GM12878 (cell line): ENCODE measurements at regions of chr12 and their contacts with region 1.

Region 1: GRCh38 chr12:92928962-92929915 is at the start of gene EEA1:
- DNase-seq: peak; percentile 84
- ATAC-seq: peak; percentile 87
- H3K4me3 ChIP-seq: peak within 1 kb of the TSS; percentile 79
- H3K27ac ChIP-seq: peak within 1 kb of the TSS; percentile 98
- H3K4me1 ChIP-seq: peaks cover 4% of the 10 kb centered on the region
- H3K27me3 ChIP-seq: no peaks in the 10 kb centered on the region
- CTCF ChIP-seq: peak in 2 of 3 experiments; percentile 29 to 31; a peak in 3 of 6 replicates
- EP300 ChIP-seq: peak; percentile 30 to 35; a peak in 2 of 4 replicates
- POLR2A ChIP-seq: peak; percentile 96
- RAD21 ChIP-seq: peak; percentile 16; the same call in 1 of the 2 replicates
- polyA plus RNA-seq, gene EEA1: 5.5 to 9.5 TPM

Region 2: GRCh38 chr12:92702754-92703679 is 226.2 kb before region 1 on chr12 and contains the start of gene PLEKHG7:
- CTCF ChIA-PET with region 1: no interaction called
- POLR2A ChIA-PET with region 1: no interaction called
- RAD21 ChIA-PET with region 1: no interaction called
- SMC1A ChIA-PET with region 1: interaction called, 3 read pairs
- in situ Hi-C with region 1: no loop called
- intact Hi-C with region 1: loop called (anchors 5 kb)
- DNase-seq: peak; percentile 80
- ATAC-seq: peak; percentile 91
- H3K4me3 ChIP-seq: peak within 1 kb of the TSS; percentile 69
- H3K27ac ChIP-seq: peak within 1 kb of the TSS; percentile 81
- H3K4me1 ChIP-seq: peaks cover 25% of the 10 kb centered on the region
- H3K27me3 ChIP-seq: no peaks in the 10 kb centered on the region
- CTCF ChIP-seq: no peak
- EP300 ChIP-seq: peak in 1 of 2 experiments; percentile 28; a peak in 1 of 4 replicates
- POLR2A ChIP-seq: peak; percentile 63; the same call in 1 of the 2 replicates
- RAD21 ChIP-seq: 0 out of 2 replicates have a peak, but pooled peaks have one; percentile 1
- polyA plus RNA-seq, gene PLEKHG7: 0.16 to 0.34 TPM

Region 3: DNA sequence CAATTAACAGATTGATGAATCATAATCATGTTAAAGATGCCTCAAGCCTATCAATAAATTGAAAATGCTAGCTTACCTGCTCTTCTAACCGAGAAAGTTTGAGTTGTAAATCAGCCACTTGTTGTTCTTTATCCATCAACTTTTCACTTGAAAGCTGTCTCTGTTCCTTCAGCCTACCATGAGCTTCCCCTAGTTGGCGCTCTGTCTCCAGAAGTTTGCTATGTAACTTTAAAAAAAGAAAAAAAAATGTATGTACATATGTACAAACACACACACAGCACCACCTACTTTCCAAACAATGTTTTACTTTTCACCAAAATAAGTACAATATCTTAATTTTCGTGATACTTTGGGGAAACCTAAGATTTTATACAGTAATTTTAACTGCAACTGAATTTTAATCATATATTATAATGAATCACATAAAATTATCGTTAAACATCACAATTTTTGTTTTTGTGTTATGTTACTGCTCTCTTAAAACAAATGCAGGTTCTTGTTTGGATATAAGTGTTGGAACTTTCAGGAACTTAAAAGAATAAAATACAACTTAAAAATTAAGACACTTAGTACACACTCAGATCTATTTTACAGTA is 101.3 kb before region 1 on chr12:
- CTCF ChIA-PET with region 1: interaction called, 11 read pairs
- POLR2A ChIA-PET with region 1: no interaction called
- RAD21 ChIA-PET with region 1: interaction called, 7 read pairs
- SMC1A ChIA-PET with region 1: interaction called, 5 read pairs
- in situ Hi-C with region 1: no loop called
- intact Hi-C with region 1: loop called (anchors 5 kb)
- DNase-seq: peak; percentile 12
- ATAC-seq: peak; percentile 81
- H3K4me3 ChIP-seq: no peak overlapping the region
- H3K27ac ChIP-seq: no peak overlapping the region
- H3K4me1 ChIP-seq: no peaks in the 10 kb centered on the region
- H3K27me3 ChIP-seq: no peaks in the 10 kb centered on the region
- CTCF ChIP-seq: peak; percentile 65 to 81 (median 81)
- EP300 ChIP-seq: no peak
- POLR2A ChIP-seq: no peak
- RAD21 ChIP-seq: peak; percentile 67

Region 4: DNA sequence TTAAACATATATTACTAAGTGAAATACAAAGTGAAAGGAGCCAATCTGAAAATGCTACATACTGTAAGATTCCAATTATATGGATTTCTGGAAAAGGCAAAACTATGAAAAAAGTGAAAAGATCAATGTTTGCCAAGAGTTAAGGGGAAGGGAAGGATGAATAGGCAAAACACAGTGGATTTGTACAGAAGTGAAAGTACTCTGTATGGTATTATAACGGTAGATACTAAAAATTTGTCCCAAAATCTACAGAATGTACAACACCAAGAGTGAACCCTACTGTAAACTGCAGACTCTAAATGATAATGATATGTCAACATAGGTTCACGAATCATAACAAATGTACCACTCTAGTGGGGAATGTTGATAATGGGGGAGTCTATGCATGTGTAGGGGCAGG is 17.9 kb before region 1 on chr12:
- CTCF ChIA-PET with region 1: interaction called, 9 read pairs
- POLR2A ChIA-PET with region 1: interaction called, 11 read pairs
- RAD21 ChIA-PET with region 1: no interaction called
- SMC1A ChIA-PET with region 1: interaction called, 8 read pairs
- in situ Hi-C with region 1: no loop called
- intact Hi-C with region 1: no loop called
- DNase-seq: no peak
- ATAC-seq: no peak
- H3K4me3 ChIP-seq: no peak overlapping the region
- H3K27ac ChIP-seq: no peak overlapping the region
- H3K4me1 ChIP-seq: no peaks in the 10 kb centered on the region
- H3K27me3 ChIP-seq: no peaks in the 10 kb centered on the region
- CTCF ChIP-seq: no peak
- EP300 ChIP-seq: no peak
- POLR2A ChIP-seq: no peak
- RAD21 ChIP-seq: no peak

Region 5: GRCh38 chr12:92973601-92974000 is 44.4 kb after region 1 on chr12:
- CTCF ChIA-PET with region 1: interaction called, 3 read pairs
- POLR2A ChIA-PET with region 1: interaction called, 11 read pairs
- RAD21 ChIA-PET with region 1: interaction called, 17 read pairs
- SMC1A ChIA-PET with region 1: interaction called, 9 read pairs
- in situ Hi-C with region 1: no loop called
- intact Hi-C with region 1: loop called (anchors 5 kb)
- DNase-seq: peak; percentile 95
- ATAC-seq: peak; percentile 62
- H3K4me3 ChIP-seq: no peak overlapping the region
- H3K27ac ChIP-seq: peak overlapping the region; percentile 91
- H3K4me1 ChIP-seq: peaks cover 55% of the 10 kb centered on the region
- H3K27me3 ChIP-seq: no peaks in the 10 kb centered on the region
- CTCF ChIP-seq: no peak
- EP300 ChIP-seq: peak; percentile 20 to 21; a peak in 1 of 4 replicates
- POLR2A ChIP-seq: no peak
- RAD21 ChIP-seq: no peak

Region 6: DNA sequence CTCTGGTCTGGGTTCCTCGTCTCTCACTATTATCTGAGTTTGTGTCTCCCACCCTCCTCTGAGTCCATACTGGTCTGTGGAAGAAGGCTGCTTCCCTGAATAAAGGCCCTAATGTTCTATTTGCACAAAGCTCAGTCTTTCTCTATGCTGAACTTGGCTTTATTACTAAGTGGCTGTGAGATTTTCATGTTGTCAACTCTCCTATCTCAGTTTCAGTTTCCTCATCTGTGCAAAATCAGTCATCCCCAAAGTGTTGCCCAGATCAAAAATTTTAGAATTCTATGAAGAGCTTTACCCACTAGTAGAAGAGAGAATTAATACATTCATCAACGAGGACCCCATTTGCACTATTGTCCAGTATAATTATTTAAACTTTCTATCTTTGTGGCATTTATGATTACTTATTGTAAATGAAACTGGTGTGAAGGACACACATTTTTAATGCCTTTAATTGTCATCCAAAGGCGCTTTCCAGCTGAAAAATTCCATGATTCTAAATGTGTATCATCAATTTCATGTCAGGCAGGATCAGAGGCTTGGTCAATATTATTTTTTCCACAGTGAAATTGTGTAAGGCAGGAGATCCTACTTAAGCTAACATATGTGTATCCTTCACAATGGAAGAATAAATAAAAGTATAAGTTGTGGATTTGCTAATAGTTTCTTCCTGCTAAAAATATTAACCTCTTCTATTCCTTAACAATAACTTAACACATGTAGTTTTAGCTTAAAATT is 79.0 kb after region 1 on chr12:
- CTCF ChIA-PET with region 1: interaction called, 4 read pairs
- POLR2A ChIA-PET with region 1: no interaction called
- RAD21 ChIA-PET with region 1: interaction called, 4 read pairs
- SMC1A ChIA-PET with region 1: interaction called, 12 read pairs
- in situ Hi-C with region 1: no loop called
- intact Hi-C with region 1: no loop called
- DNase-seq: no peak
- ATAC-seq: peak; percentile 92
- H3K4me3 ChIP-seq: no peak overlapping the region
- H3K27ac ChIP-seq: peak overlapping the region; percentile 45
- H3K4me1 ChIP-seq: peaks cover 36% of the 10 kb centered on the region
- H3K27me3 ChIP-seq: no peaks in the 10 kb centered on the region
- CTCF ChIP-seq: no peak
- EP300 ChIP-seq: no peak
- POLR2A ChIP-seq: no peak
- RAD21 ChIP-seq: no peak

Region 7: DNA sequence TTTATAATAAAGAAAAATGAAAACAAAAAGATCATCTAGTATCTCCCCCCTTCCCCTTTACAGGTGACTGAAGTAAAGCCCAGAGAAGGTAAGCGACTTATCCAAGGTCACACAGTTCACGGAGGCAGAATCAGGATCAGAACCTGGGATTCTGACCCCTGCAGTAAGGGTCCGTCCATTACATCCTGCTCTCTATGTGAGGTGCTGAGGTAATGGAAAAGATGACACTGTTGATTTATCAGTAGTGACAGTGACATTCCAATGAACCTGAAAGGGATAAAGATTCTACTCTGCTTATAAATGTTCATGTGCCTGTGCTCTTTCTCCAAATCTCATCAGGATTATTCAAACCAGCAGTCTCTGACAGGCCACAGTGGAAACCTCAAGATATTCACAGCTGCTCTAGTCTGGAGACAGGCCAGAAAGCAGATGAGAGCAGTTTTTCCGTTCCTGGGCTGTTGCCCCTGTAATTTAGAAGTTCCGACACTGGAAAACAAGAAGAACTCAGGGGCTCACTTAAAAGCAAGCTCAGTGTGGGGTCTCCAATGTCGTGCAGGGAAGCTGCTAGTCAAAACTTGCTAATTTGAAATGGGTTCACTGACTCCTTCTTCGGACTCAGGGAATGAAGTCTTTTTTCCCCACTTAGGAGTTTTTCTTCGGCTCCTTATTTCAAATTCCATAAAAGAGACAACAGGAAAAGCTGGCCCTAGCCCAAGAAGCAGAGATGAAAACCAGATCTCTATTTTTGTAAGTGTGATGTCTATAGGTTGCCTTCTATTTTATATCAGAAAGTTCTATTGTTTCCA is 131.6 kb after region 1 on chr12:
- CTCF ChIA-PET with region 1: no interaction called
- POLR2A ChIA-PET with region 1: no interaction called
- RAD21 ChIA-PET with region 1: no interaction called
- SMC1A ChIA-PET with region 1: no interaction called
- in situ Hi-C with region 1: no loop called
- intact Hi-C with region 1: no loop called
- DNase-seq: peak; percentile 21
- ATAC-seq: peak; percentile 61
- H3K4me3 ChIP-seq: 0 out of 2 replicates have a peak overlapping the region, but pooled peaks have one; percentile 2
- H3K27ac ChIP-seq: peak overlapping the region; percentile 61
- H3K4me1 ChIP-seq: peaks cover 26% of the 10 kb centered on the region
- H3K27me3 ChIP-seq: no peaks in the 10 kb centered on the region
- CTCF ChIP-seq: no peak
- EP300 ChIP-seq: peak in 1 of 2 experiments; percentile 29; a peak in 1 of 4 replicates
- POLR2A ChIP-seq: no peak
- RAD21 ChIP-seq: peak; percentile 8; the same call in 1 of the 2 replicates

Region 8: DNA sequence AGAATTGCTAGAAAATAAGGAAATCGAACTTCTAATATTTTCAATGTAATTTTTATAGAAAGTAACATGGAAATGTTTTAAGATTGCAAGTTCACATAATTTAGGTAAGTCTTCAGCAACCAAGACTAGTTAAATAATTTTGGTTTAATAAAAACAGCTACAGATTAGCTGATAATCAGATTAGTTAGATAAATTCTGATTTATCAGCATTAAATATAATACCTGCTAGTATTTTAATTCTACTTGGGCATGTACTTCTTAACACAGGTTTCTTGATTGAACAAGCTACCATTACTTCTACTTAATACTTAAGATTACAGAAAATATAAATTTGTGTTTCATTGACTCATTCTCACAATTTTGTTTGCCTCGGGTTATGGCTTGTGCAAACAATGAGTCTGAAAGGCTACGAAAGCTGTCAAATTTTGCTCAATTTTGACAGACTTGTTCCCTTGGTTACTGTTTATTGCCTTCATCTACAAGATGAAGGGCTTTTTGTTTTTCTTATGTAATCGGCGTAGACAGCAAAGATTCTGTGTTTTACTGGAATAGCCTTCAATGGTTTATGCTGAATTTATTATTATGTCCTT is 332.4 kb after region 1 on chr12:
- CTCF ChIA-PET with region 1: no interaction called
- POLR2A ChIA-PET with region 1: no interaction called
- RAD21 ChIA-PET with region 1: no interaction called
- SMC1A ChIA-PET with region 1: no interaction called
- in situ Hi-C with region 1: no loop called
- intact Hi-C with region 1: no loop called
- DNase-seq: no peak
- ATAC-seq: no peak
- H3K4me3 ChIP-seq: no peak overlapping the region
- H3K27ac ChIP-seq: no peak overlapping the region
- H3K4me1 ChIP-seq: no peaks in the 10 kb centered on the region
- H3K27me3 ChIP-seq: no peaks in the 10 kb centered on the region
- CTCF ChIP-seq: no peak
- EP300 ChIP-seq: no peak
- POLR2A ChIP-seq: no peak
- RAD21 ChIP-seq: no peak

Region 9: DNA sequence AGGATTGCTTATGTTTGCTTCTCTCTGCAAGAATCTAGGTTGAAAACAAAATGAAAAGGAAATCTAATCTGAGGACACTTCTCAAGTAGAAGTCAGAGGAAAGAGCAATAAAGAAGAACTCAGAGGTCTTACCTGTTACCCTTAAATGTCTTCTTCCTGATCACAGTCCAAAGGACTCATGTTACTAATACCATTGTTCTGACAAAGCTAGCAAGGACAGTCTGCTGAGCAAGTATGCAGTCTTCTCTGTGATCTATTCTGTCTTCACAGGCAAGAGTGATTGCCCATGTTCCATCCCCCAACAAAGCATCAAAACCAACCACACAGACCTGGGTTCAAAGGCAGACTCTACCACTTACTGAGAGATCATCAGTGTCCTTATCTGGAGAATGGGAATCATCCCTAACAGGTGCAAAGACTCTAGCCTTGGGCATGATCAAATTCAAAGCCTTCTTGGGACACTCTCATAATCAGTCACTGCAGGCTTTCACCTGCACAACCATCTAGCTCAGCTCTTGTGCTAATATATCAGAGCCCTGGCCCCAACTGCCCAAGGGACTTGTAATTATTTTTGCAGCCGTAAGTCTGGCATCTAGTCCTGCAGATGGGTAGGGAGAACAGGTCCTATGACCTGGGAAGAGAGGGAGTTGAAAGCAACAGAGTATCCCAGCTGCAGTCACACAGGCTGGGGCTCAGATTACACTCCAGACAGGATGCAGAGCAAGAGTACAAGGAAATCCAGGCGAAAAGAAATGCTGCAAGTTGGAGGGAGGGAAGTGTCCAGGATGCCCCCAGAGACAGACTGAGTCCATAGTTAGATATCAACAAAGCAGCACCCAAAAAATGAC is 350.6 kb after region 1 on chr12:
- CTCF ChIA-PET with region 1: no interaction called
- POLR2A ChIA-PET with region 1: no interaction called
- RAD21 ChIA-PET with region 1: no interaction called
- SMC1A ChIA-PET with region 1: no interaction called
- in situ Hi-C with region 1: no loop called
- intact Hi-C with region 1: no loop called
- DNase-seq: no peak
- ATAC-seq: no peak
- H3K4me3 ChIP-seq: no peak overlapping the region
- H3K27ac ChIP-seq: no peak overlapping the region
- H3K4me1 ChIP-seq: no peaks in the 10 kb centered on the region
- H3K27me3 ChIP-seq: no peaks in the 10 kb centered on the region
- CTCF ChIP-seq: no peak
- EP300 ChIP-seq: no peak
- POLR2A ChIP-seq: no peak
- RAD21 ChIP-seq: no peak